BJ (cell line): ENCODE measurements at regions of chr2 and their contacts with region 1.

Region 1: DNA sequence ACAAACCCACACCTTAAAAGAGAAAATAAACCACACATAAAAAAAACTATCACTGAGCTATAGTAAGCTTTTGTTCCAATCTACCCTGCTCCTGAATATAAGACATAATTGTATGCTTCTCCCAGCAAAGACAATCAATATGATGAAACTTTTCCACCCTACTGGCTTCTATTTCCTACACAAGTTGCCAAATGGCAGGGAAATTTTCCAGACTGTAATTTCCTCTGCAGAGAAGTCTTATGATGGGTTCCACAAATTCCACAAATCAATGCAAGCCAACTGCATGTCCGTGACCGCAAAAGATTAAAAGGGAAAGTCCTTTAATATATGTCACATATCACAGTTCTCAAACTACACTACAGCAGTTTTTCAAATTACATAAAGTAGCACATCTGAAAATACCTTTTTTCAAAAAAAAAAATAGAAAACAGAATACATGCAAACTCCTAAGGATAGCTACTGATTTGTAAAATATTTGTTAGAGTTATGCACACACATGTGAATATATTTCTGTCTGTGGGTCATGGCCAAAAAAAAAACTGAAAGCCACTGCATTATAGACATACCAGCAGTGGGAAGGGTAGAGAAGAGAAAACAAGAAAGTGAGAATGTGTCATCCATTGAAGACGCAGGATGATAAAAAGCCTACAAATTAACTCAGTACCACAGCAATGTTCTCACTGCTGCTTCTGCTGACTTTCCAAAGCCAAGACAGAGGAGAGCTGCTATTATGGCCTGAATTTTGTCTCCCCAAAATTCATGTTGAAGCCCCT is 61.4 kb downstream of the RPL31 start:
- DNase-seq: peak; percentile 53
- H3K4me3 ChIP-seq: no peak overlapping the region
- H3K27me3 ChIP-seq: no peaks in the 10 kb centered on the region
- CTCF ChIP-seq: no peak

Region 2: GRCh38 chr2:101125374-101125773 is 61.8 kb after region 1 on chr2:
- CTCF ChIA-PET with region 1: interaction called, 3 read pairs
- POLR2A ChIA-PET with region 1: interaction called, 15 read pairs
- DNase-seq: no peak
- H3K4me3 ChIP-seq: no peak overlapping the region
- H3K27me3 ChIP-seq: no peaks in the 10 kb centered on the region
- CTCF ChIP-seq: no peak